OCI-LY7 (cell line): ENCODE measurements at regions of chr3 and their contacts with region 1.

Region 1: GRCh38 chr3:129305592-129306091 is 27.0 kb downstream of the HMCES start:
- DNase-seq: no peak
- H3K4me3 ChIP-seq: no peak overlapping the region
- H3K27ac ChIP-seq: no peak overlapping the region
- H3K4me1 ChIP-seq: no peaks in the 10 kb centered on the region
- CTCF ChIP-seq: no peak

Region 2: GRCh38 chr3:129259612-129260452 is 45.8 kb before region 1 on chr3:
- CTCF ChIA-PET with region 1: no interaction called
- POLR2A ChIA-PET with region 1: no interaction called
- intact Hi-C with region 1: no loop called
- DNase-seq: no peak
- H3K4me3 ChIP-seq: no peak overlapping the region
- H3K27ac ChIP-seq: no peak overlapping the region
- H3K4me1 ChIP-seq: no peaks in the 10 kb centered on the region
- CTCF ChIP-seq: no peak

Region 3: GRCh38 chr3:129289201-129289921 is 16.3 kb before region 1 on chr3:
- CTCF ChIA-PET with region 1: no interaction called
- POLR2A ChIA-PET with region 1: interaction called, 3 read pairs
- intact Hi-C with region 1: loop called (anchors 2 kb)
- DNase-seq: no peak
- H3K4me3 ChIP-seq: no peak overlapping the region
- H3K27ac ChIP-seq: no peak overlapping the region
- H3K4me1 ChIP-seq: peaks cover 19% of the 10 kb centered on the region
- CTCF ChIP-seq: no peak

Region 4: GRCh38 chr3:129321887-129322286 is 16.2 kb after region 1 on chr3:
- CTCF ChIA-PET with region 1: no interaction called
- POLR2A ChIA-PET with region 1: no interaction called
- intact Hi-C with region 1: no loop called
- DNase-seq: no peak
- H3K4me3 ChIP-seq: no peak overlapping the region
- H3K27ac ChIP-seq: no peak overlapping the region
- H3K4me1 ChIP-seq: peaks cover 19% of the 10 kb centered on the region
- CTCF ChIP-seq: no peak